ENCODE measurements at regions of chrX and their contacts with region 1.

Region 1: DNA sequence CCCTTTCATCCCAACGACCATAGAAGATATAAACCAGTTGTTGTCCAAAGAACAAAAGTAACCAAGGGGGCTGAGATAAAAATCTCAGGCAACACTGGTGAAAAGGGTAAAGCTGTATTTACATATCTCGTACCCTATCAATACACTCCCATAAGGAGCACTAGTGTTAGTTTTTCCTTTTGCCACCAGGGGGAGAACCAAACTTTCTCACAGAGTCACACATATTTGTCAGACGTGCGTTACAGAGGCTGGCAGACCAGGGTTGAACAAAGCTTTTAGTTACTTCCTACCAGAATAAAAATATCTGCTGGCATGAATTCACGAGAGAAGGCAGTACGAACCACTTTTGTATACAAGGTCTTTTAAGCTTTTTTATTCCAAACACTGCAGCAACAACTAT is 88.3 kb downstream of the AMELX start:
- DNase-seq: peak; percentile 31 to 84 (median 36)
- ATAC-seq: peak; percentile 88
- H3K4me3 ChIP-seq: no peak overlapping the region
- H3K27ac ChIP-seq: peak overlapping the region; percentile 8; the same call in 1 of the 3 replicates
- H3K4me1 ChIP-seq: peaks cover 10 to 54% of the 10 kb centered on the region in 2 experiments
- H3K27me3 ChIP-seq: no peaks in the 10 kb centered on the region
- CTCF ChIP-seq: peak; percentile 67 to 72 (median 72)
- EP300 ChIP-seq: no peak
- POLR2A ChIP-seq: no peak
- RAD21 ChIP-seq: peak; percentile 61 to 83

Region 2: DNA sequence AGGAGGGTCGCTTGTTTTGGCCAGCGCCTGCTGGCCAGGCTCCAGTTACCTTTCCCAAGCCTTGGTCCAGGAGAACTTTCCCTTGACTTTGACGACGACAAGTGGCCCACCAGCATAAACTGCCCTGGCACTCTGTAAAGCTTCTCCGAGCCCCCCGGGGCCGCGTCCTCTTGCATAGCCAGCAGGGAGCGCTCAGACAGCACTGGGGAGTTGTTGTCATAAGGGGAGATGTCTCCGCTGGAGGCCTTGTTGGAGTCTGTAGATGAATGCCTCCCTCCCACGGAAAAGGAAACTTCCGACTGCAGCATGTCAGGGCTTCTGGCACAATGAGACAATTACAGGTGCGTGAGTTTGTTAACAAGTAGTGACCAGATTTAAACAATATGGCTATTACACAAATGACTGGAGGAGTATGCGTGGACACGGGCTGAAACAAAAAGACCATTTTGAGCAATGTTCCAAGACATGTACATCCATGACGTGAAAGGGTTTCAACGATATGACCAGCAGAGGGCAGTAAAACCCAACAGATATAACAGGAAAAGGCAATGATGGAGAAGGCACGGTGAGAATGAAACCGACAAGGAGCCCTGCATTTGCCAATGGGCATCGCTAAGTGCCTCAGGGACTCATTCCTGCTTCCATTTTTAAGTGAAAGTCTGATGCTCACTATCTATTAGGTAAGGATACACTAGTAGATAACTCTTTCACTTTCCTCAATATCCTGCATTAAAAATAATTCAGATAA is 237.4 kb before region 1 on chrX:
- CTCF ChIA-PET with region 1: no interaction called
- POLR2A ChIA-PET with region 1: interaction called, 3 read pairs
- in situ Hi-C with region 1: no loop called
- intact Hi-C with region 1: loop called (anchors 5 kb)
- DNase-seq: peak; percentile 39 to 81 (median 53)
- ATAC-seq: peak; percentile 93
- H3K4me3 ChIP-seq: no peak overlapping the region
- H3K27ac ChIP-seq: no peak overlapping the region
- H3K4me1 ChIP-seq: no peaks in the 10 kb centered on the region; a peak in 2 of 5 replicates
- H3K27me3 ChIP-seq: no peaks in the 10 kb centered on the region
- CTCF ChIP-seq: peak; percentile 48 to 74 (median 65); a peak in 5 of 6 replicates
- EP300 ChIP-seq: no peak
- POLR2A ChIP-seq: no peak
- RAD21 ChIP-seq: peak; percentile 71 to 78

Region 3: DNA sequence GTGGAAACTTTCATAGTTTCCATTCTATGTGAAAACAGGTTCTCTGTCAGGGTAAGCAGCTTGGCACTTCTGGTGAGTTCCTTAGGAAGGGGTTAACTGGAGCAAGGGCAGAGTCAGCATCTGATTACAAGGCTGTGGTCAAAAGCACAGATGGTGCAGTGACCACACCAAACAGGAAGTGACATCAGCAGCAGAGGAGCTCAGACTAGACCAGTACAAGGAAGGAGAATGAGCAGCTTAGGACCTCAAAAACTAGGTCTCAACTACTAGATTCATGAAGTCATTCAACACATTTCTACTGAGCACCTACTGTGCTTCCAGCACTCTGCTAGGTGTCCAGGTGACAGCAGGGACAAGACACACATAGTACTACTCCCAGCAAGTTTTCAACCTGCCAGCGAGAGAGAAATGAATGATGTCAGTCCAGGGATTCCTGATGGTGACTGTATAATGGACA is 41.9 kb after region 1 on chrX:
- CTCF ChIA-PET with region 1: no interaction called
- POLR2A ChIA-PET with region 1: interaction called, 5 read pairs
- in situ Hi-C with region 1: no loop called
- intact Hi-C with region 1: loop called (anchors 2 kb)
- DNase-seq: peak; percentile 34 to 89 (median 56)
- ATAC-seq: peak; percentile 64
- H3K4me3 ChIP-seq: peak overlapping the region; percentile 11; the same call in 1 of the 2 replicates
- H3K27ac ChIP-seq: peak overlapping the region; percentile 92
- H3K4me1 ChIP-seq: peaks cover 13 to 62% of the 10 kb centered on the region in 2 experiments
- H3K27me3 ChIP-seq: no peaks in the 10 kb centered on the region
- CTCF ChIP-seq: no peak
- EP300 ChIP-seq: peak; percentile 74
- POLR2A ChIP-seq: peak; percentile 73
- RAD21 ChIP-seq: no peak

Region 4: DNA sequence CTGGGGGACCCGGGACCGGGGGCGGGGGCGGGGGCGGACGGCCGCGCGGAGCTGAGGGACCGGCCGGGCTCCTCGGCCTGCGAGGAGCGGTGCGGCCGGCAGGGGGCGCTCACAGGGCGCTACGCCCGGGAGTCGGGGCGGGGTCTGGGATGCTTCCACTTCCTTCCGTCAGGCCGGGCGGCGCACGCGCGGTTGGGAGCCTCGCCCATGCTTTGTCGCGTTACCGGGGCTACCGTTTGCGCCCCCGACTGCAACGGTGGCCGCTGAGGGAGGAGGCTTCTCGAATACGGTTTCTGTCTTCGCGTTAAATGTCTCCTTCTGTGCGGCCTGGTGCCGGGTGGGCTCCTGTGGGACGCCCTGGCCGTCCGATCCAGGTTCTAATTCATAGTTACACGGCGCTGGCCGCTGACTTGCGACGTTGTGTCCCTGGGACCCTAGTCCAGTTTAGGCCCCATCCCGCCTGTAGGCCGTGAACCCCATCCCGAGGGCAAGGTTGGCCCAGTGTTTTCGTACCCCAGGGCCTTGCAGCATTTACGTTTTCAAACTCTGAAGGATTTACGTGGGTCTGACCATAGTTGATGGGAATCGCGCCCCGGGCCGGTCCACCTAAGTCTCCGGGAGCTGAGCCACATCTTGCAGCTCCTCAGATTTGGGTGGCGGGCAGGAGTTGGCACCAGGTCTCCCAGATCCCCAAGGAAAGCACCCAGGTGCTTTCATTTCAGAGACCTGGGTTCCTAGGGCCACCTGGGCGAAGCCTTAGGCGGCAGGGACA is 377.1 kb after region 1 on chrX:
- CTCF ChIA-PET with region 1: no interaction called
- POLR2A ChIA-PET with region 1: no interaction called
- in situ Hi-C with region 1: loop called (anchors 25 kb)
- intact Hi-C with region 1: no loop called
- DNase-seq: peak; percentile 82 to 92 (median 86)
- ATAC-seq: peak; percentile 83
- H3K4me3 ChIP-seq: peak overlapping the region; percentile 79
- H3K27ac ChIP-seq: peak overlapping the region; percentile 74
- H3K4me1 ChIP-seq: peaks cover 6% of the 10 kb centered on the region in 2 experiments; a peak in 4 of 5 replicates
- H3K27me3 ChIP-seq: no peaks in the 10 kb centered on the region
- CTCF ChIP-seq: peak; percentile 41 to 65 (median 59); a peak in 4 of 6 replicates
- EP300 ChIP-seq: no peak
- POLR2A ChIP-seq: peak; percentile 54
- RAD21 ChIP-seq: 0 out of 4 replicates have a peak, but pooled peaks of 1 of the 2 experiments have one; percentile 8

Measured in K562 (cell line).